OCI-LY7 (cell line): ENCODE measurements at regions of chr2 and their contacts with region 1.

Region 1: GRCh38 chr2:136255648-136256463 is 137.9 kb upstream of the CXCR4 start:
- DNase-seq: peak; percentile 85
- H3K4me3 ChIP-seq: peak overlapping the region; percentile 26
- H3K27ac ChIP-seq: peak overlapping the region; percentile 79
- H3K4me1 ChIP-seq: peaks cover 72% of the 10 kb centered on the region
- CTCF ChIP-seq: peak; percentile 80

Region 2: GRCh38 chr2:136107051-136108033 is 148.5 kb before region 1 on chr2:
- CTCF ChIA-PET with region 1: no interaction called
- POLR2A ChIA-PET with region 1: interaction called, 10 read pairs
- intact Hi-C with region 1: no loop called
- DNase-seq: no peak
- H3K4me3 ChIP-seq: peak overlapping the region; percentile 15
- H3K27ac ChIP-seq: peak overlapping the region; percentile 32
- H3K4me1 ChIP-seq: peaks cover 65% of the 10 kb centered on the region
- CTCF ChIP-seq: no peak; the same call in 1 of the 2 replicates

Region 3: GRCh38 chr2:136129601-136130000 is 126.3 kb before region 1 on chr2:
- CTCF ChIA-PET with region 1: interaction called, 4 read pairs
- POLR2A ChIA-PET with region 1: interaction called, 56 read pairs
- intact Hi-C with region 1: loop called (anchors 1 kb)
- DNase-seq: peak; percentile 80
- H3K4me3 ChIP-seq: peak overlapping the region; percentile 28
- H3K27ac ChIP-seq: peak overlapping the region; percentile 98
- H3K4me1 ChIP-seq: peaks cover 98% of the 10 kb centered on the region
- CTCF ChIP-seq: no peak

Region 4: DNA sequence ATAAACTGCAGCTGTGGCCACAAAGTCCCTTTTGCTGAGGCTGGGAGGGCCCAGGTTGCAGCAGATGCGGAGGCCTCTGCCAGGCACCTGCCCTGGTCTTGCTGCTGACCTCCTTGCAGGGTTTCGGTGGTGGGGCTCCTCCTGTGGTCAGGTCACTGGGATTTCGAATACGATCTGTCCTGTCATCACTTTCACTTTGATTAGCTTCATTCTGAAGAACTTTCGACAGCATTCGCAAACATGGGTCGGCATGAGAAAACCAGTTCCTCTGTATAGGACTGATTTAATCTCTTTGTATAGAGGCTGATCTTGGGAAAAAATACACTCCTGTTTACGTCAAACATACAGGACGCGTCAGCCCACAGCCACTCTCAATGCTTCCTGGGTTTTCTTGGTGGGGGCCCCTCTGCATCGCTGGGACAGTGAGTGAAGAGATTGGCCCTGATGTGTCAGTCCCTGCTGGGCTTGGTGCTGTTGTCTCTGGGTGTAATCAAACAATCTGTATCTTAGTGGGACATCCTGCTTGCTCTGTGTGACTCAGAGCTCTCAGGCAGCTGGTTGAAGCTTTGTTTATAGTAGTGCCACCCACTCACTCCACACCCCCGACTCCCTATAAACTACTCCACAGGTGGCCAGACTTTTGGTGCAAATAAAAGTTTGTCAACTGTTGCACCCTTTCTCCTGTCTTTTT is 71.5 kb after region 1 on chr2:
- CTCF ChIA-PET with region 1: no interaction called
- POLR2A ChIA-PET with region 1: interaction called, 9 read pairs
- intact Hi-C with region 1: loop called (anchors 2 kb)
- DNase-seq: peak; percentile 78
- H3K4me3 ChIP-seq: peak overlapping the region; percentile 63
- H3K27ac ChIP-seq: peak overlapping the region; percentile 81
- H3K4me1 ChIP-seq: peaks cover 74% of the 10 kb centered on the region
- CTCF ChIP-seq: no peak; the same call in 1 of the 2 replicates

Region 5: DNA sequence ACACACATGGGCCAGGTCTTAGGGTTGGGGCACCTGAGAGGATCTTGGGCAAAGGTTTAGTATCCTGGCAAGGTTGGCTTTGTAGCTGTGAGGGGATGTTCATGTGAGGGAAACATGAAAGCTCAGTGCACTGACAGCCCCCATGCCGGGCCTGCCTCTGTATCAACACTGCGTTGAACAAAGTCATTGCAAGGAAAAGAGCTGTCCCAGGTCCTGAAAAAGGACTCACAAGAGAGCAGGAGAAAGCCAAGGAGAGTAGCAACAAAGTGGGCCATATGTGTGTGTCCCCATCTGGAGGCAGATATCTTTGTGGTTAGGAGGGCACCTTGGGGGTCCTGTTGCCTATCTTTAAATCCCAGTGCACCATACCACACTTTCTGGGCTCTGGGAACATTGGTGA is 271.7 kb after region 1 on chr2:
- CTCF ChIA-PET with region 1: no interaction called
- POLR2A ChIA-PET with region 1: no interaction called
- intact Hi-C with region 1: no loop called
- DNase-seq: peak; percentile 44
- H3K4me3 ChIP-seq: no peak overlapping the region
- H3K27ac ChIP-seq: no peak overlapping the region
- H3K4me1 ChIP-seq: no peaks in the 10 kb centered on the region
- CTCF ChIP-seq: no peak

Region 6: DNA sequence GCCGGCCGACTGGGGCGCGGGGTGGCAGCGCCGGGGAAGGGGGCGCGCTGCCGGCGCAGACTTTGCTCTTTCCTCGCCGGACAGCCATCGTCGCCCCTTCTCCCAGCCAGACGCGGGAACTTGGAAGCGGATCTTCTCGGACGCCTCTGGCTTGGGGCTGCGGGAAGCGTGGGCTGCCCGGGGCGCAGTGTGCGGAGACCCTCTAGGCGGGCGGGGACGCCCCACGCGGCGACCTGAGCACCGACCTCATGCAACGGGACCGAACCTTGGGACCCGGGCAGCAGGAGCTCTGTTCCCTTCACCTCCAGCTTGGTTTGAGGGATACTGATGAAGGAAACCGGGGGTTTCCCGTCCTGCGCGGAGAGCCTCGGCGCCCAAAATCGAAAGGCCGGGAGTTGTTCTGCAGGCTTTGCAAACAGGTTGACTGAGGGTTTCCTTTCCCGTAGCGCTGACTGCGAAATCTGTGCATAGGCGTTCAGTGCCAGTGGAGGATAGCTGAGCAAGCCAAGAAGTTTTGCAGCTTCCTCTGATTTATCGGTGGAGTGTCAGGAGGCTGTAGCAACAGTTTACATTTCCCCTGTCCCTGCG is 510.0 kb after region 1 on chr2:
- CTCF ChIA-PET with region 1: no interaction called
- POLR2A ChIA-PET with region 1: no interaction called
- intact Hi-C with region 1: no loop called
- DNase-seq: no peak
- H3K4me3 ChIP-seq: no peak overlapping the region
- H3K27ac ChIP-seq: no peak overlapping the region
- H3K4me1 ChIP-seq: no peaks in the 10 kb centered on the region
- CTCF ChIP-seq: no peak